ENCODE measurements at regions of chr2 and their contacts with region 1.

Region 1: GRCh38 chr2:71778936-71779773 is 325.8 kb downstream of the DYSF start:
- DNase-seq: peak in 1 of 2 experiments; percentile 42
- ATAC-seq: peak; percentile 50 to 68; a peak in 4 of 6 replicates
- H3K4me3 ChIP-seq: no peak overlapping the region
- H3K27ac ChIP-seq: peak overlapping the region; percentile 52 to 66; a peak in 4 of 6 replicates
- H3K4me1 ChIP-seq: peaks cover 28% of the 10 kb centered on the region
- CTCF ChIP-seq: peak; percentile 50
- EP300 ChIP-seq: no peak
- POLR2A ChIP-seq: no peak
- RAD21 ChIP-seq: peak; percentile 69 to 76

Region 2: DNA sequence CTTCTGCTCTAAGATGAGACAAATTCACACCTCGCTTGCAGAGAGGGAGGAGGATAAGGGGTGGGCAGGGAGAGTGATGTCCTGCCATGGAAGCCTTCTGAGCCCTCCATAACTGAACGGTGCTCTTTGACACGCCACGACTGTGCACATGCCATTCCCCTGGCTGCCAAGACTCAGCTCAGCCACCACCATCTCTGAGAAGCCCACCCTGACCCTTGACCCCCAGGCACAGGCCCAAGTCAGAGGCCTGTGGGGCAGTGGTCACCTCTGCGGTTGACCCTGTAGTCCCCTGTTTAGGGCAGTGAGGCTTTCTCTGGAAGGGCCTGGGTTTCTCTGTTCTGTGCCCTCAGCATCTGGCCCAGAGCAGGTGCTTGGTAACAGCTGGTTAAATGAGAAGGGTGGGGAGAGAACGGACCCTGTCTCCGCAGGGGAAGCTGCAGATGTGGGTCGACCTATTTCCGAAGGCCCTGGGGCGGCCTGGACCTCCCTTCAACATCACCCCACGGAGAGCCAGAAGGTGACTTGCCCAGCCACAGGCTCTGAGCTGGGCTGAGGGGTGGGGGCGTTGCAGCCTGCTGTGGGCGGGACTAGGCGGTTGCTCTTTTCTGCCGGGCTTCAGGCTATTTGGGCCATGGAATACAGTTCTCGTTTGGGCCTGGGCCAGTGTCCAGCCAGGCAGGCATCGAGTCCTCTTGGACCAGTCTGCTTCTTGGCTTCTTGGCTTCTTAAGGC is 110.7 kb before region 1 on chr2:
- CTCF ChIA-PET with region 1: no interaction called
- POLR2A ChIA-PET with region 1: no interaction called
- DNase-seq: no peak
- ATAC-seq: no peak
- H3K4me3 ChIP-seq: no peak overlapping the region
- H3K27ac ChIP-seq: no peak overlapping the region
- H3K4me1 ChIP-seq: no peaks in the 10 kb centered on the region
- CTCF ChIP-seq: no peak
- EP300 ChIP-seq: no peak
- POLR2A ChIP-seq: no peak
- RAD21 ChIP-seq: no peak

Region 3: DNA sequence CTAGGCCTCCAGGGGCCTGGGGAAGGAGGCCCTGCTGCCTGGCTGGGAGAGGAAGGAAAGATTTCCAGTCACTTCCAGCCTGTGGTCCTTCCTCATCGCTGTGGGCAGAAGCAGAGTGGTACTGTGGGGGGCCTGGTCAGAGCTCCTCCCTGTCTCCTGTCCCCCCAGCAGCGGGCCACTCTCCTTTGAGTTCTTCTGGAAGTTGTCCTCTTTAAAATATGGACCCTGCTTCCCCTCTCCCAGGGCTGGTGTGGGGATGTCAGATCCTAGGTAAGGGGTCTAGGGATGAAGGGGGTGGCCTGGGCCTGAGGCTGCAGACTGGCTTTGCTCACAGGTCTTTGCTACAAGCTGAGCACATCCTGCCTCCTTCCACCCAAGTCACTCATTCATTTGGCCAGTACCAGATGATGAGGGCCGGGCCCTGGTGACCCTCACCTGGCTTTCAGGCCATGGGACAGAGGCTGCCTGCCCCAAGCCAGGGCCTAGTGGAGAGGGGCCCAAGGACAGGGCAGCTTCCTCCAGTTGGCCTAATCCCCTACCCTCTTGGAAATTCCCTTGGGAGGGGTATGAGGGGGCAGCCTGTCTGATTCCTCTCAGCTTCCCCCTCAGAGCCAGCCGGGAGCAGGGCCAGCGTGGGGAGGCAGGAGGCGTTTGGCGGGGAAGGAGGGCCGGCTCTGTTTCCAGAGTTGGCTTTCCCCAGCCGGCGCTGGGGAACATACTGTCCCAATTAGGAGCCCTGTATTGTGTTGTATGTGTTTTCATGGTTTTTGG is 93.9 kb before region 1 on chr2:
- CTCF ChIA-PET with region 1: no interaction called
- POLR2A ChIA-PET with region 1: no interaction called
- DNase-seq: no peak
- ATAC-seq: no peak
- H3K4me3 ChIP-seq: no peak overlapping the region
- H3K27ac ChIP-seq: no peak overlapping the region
- H3K4me1 ChIP-seq: no peaks in the 10 kb centered on the region
- CTCF ChIP-seq: no peak
- EP300 ChIP-seq: no peak
- POLR2A ChIP-seq: no peak
- RAD21 ChIP-seq: no peak

Region 4: DNA sequence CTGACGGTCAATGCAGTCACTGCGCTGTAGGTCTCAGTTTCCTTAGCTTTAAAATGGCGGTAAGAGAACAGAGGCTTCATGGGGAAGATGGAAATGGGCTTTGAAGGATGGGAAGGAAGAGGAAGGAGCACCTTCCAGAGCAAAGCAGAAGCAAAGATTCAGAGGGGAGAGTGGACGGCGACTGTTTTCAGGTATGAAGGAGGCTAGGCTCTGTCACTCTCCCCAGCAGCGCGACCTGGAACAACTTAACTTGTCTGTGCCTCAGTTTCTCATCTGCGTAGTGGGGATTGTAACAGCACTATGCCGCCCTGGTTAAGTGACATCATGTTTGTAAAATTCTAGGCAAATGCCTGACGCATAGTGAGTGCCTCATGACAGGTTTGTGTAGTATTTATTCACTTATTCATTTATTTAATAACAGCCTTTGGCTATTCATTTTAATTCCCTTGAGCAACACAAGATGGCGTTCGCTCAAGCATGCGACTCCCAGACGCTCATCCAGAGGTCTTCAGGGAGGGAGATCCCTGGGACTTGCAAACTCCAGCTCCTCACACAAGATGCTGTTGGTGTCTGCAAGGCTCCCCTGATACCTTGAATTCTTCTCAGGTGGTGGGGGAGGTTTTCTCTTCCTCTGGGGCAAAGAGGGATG is 10.5 kb after region 1 on chr2:
- CTCF ChIA-PET with region 1: interaction called, 222 read pairs
- POLR2A ChIA-PET with region 1: no interaction called
- DNase-seq: peak in 1 of 2 experiments; percentile 52
- ATAC-seq: 0 out of 6 replicates have a peak, but pooled peaks of 1 of the 2 experiments have one; percentile 10
- H3K4me3 ChIP-seq: no peak overlapping the region
- H3K27ac ChIP-seq: no peak overlapping the region
- H3K4me1 ChIP-seq: peaks cover 20% of the 10 kb centered on the region
- CTCF ChIP-seq: peak; percentile 28; the same call in 2 of the 3 replicates
- EP300 ChIP-seq: no peak
- POLR2A ChIP-seq: no peak
- RAD21 ChIP-seq: peak; percentile 10 to 40; a peak in 2 of 5 replicates

Region 5: GRCh38 chr2:71798266-71799012 is 19.3 kb after region 1 on chr2:
- CTCF ChIA-PET with region 1: interaction called, 222 read pairs
- POLR2A ChIA-PET with region 1: no interaction called
- DNase-seq: peak; percentile 71 to 74
- ATAC-seq: peak; percentile 73 to 90
- H3K4me3 ChIP-seq: no peak overlapping the region
- H3K27ac ChIP-seq: no peak overlapping the region
- H3K4me1 ChIP-seq: peaks cover 9% of the 10 kb centered on the region
- CTCF ChIP-seq: peak; percentile 79
- EP300 ChIP-seq: no peak
- POLR2A ChIP-seq: no peak
- RAD21 ChIP-seq: peak; percentile 70 to 75

Measured in A549 (cell line).